Left ventricle myocardium inferior (tissue), 1 donor: ENCODE measurements at regions of chr7 and their contacts with region 1.

Region 1: GRCh38 chr7:119935418-119936025 is 337.5 kb upstream of the KCND2 start:
- DNase-seq: no peak
- H3K4me3 ChIP-seq: no peak overlapping the region
- H3K27ac ChIP-seq: no peak overlapping the region
- H3K4me1 ChIP-seq: no peaks in the 10 kb centered on the region
- H3K27me3 ChIP-seq: no peaks in the 10 kb centered on the region
- CTCF ChIP-seq: peak; percentile 57

Region 2: DNA sequence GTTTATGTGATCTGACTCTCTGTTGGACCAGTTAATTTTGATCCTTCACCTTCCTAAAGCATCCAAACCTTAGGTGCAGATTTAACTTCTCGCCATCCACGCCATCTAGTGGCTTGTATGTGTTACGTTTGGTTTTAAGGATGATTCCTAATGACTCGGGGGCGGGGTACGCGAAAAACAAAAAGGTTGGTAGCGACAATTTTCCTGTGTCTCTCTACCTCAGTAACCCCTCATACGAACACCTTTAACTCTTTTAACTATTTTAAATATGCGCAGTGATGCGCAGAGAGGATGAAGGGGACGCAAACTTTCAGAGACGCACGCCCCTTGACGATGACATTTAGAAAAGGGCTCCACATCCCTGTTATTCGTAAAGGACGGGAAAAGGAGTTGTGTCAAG is 336.7 kb after region 1 on chr7:
- intact Hi-C with region 1: loop called (anchors 5 kb)
- DNase-seq: no peak
- H3K4me3 ChIP-seq: peak overlapping the region; percentile 62
- H3K27ac ChIP-seq: no peak overlapping the region
- H3K4me1 ChIP-seq: peaks cover 12% of the 10 kb centered on the region
- H3K27me3 ChIP-seq: peaks cover 55% of the 10 kb centered on the region
- CTCF ChIP-seq: peak; percentile 68